Activated CD8-positive, alpha-beta T cell treated with anti-CD3 and anti-CD28 coated beads for 36 hours (primary cell): ENCODE measurements at regions of chr1 and their contacts with region 1.

Region 1: GRCh38 chr1:237386362-237387143 is 344.6 kb downstream of the RYR2 start:
- DNase-seq: no peak
- ATAC-seq: no peak
- H3K4me3 Mint-ChIP-seq: no peak overlapping the region
- H3K27ac Mint-ChIP-seq: no peak overlapping the region
- H3K4me1 Mint-ChIP-seq: no peaks in the 10 kb centered on the region
- H3K27me3 Mint-ChIP-seq: peaks cover 14% of the 10 kb centered on the region
- CTCF ChIP-seq: peak; percentile 68

Region 2: GRCh38 chr1:237045278-237046016 is 341.1 kb before region 1 on chr1:
- CTCF ChIA-PET with region 1: interaction called, 3 read pairs
- POLR2A ChIA-PET with region 1: no interaction called
- intact Hi-C with region 1: loop called (anchors 5 kb)
- DNase-seq: peak; percentile 8
- ATAC-seq: no peak
- H3K4me3 Mint-ChIP-seq: no peak overlapping the region
- H3K27ac Mint-ChIP-seq: no peak overlapping the region
- H3K4me1 Mint-ChIP-seq: peaks cover 7% of the 10 kb centered on the region
- H3K27me3 Mint-ChIP-seq: peaks cover 42% of the 10 kb centered on the region
- CTCF ChIP-seq: no peak

Region 3: GRCh38 chr1:237258871-237259270 is 127.7 kb before region 1 on chr1:
- CTCF ChIA-PET with region 1: no interaction called
- POLR2A ChIA-PET with region 1: no interaction called
- intact Hi-C with region 1: no loop called
- DNase-seq: no peak
- ATAC-seq: no peak
- H3K4me3 Mint-ChIP-seq: no peak overlapping the region
- H3K27ac Mint-ChIP-seq: no peak overlapping the region
- H3K4me1 Mint-ChIP-seq: no peaks in the 10 kb centered on the region
- H3K27me3 Mint-ChIP-seq: peaks cover 10% of the 10 kb centered on the region
- CTCF ChIP-seq: no peak